Keratinocyte (primary cell): ENCODE measurements at regions of chr9 and their contacts with region 1.

Region 1: DNA sequence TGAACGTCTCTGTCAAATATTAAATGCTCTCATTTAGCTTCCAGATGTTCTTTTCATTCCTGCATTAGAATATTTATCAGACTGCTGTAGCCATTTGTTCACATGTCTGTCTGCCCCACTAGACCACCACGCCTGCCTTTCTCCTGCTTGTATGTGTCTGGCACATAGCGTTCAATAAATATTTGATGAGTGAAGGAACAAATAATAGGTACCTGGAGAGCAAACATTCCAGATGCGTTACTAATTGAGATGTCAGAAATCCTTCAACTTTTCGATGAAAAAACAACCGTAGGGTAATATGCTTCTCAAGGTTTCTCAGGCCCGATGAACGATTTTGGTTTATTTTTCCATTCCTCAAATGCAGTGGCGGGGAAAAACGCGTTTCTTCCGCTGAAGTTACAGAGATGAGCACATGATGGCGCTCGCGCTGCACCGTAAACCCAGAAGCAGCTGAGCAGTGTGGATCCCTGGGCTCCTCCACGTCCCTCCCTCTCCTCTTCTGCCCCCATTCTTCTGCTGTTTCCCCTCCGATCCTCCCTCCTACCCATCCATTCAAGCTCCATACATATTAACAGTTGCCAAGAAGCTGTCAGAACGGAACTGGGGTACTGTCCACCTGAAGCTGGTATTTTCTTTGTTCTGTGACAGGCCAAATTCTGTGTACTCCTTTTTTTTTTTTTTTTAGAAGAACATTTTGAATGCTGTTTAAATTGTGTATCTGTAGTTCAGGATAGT is 245.4 kb downstream of the MPDZ start:
- DNase-seq: no peak
- H3K4me3 ChIP-seq: peak overlapping the region in 1 of 3 experiments; percentile 36
- H3K27ac ChIP-seq: no peak overlapping the region
- H3K4me1 ChIP-seq: peaks cover 12% of the 10 kb centered on the region
- H3K27me3 ChIP-seq: no peaks in the 10 kb centered on the region
- CTCF ChIP-seq: peak; percentile 86 to 96 (median 86)

Region 2: DNA sequence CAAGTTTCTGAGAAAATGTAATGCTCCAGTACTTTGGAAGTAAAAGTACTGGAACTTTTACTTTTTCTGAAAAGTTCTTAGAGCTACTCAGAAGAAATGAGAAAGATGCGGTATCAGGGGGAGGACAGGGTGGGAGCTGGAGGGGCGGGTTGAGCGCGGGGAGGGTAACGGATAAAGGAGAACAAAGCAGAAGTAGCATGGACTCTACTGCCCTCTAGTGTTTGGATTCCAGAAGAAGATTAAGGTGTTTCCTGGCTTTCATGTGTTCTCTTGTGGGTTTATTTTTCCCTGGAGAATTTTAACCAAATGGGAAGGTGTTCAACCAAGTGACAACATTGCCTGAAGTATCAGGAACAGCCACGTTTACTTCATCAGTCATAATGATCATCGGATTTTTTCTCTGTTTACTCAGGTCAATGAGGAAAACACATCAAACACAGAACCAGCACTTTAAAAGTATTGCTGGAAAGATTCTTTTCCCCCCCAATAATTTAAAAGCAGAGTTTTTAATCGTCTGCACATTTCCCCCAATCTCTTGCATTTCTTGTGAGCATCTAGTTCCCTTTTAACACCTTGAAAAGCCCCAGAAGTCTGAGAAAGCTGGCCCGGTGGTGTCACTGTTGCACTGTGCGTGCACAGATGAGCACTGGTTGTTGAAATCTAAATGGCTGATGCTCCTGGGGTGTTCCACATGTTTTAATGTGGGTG is 54.7 kb after region 1 on chr9:
- dilution Hi-C with region 1: loop called (anchors 5 kb)
- DNase-seq: no peak
- H3K4me3 ChIP-seq: no peak overlapping the region
- H3K27ac ChIP-seq: no peak overlapping the region
- H3K4me1 ChIP-seq: peaks cover 5% of the 10 kb centered on the region
- H3K27me3 ChIP-seq: no peaks in the 10 kb centered on the region
- CTCF ChIP-seq: peak; percentile 34 to 69 (median 69)

Region 3: DNA sequence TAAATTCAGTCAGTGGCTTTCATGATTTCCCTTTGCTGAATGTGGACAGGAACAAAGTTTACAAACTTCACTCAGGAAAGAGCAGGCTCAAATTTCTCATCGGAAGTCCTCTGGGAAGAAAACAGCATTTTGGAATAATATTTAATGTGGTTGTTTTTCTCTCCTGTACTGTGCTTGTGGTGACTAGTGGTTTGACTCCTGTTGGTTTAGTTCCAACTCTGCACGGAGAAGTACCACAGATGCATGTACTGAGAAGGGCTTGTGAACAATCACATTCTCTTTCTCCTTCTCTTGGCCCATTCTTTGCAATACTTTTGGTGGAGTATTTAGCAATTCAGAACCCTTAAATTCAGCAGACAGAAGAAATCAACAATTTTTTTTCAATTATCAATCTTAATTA is 232.0 kb after region 1 on chr9:
- dilution Hi-C with region 1: no loop called
- DNase-seq: no peak
- H3K4me3 ChIP-seq: no peak overlapping the region
- H3K27ac ChIP-seq: no peak overlapping the region
- H3K4me1 ChIP-seq: peaks cover 9% of the 10 kb centered on the region
- H3K27me3 ChIP-seq: no peaks in the 10 kb centered on the region
- CTCF ChIP-seq: no peak

Region 4: GRCh38 chr9:13461414-13461991 is 427.4 kb after region 1 on chr9:
- dilution Hi-C with region 1: no loop called
- DNase-seq: no peak
- H3K4me3 ChIP-seq: no peak overlapping the region
- H3K27ac ChIP-seq: no peak overlapping the region
- H3K4me1 ChIP-seq: no peaks in the 10 kb centered on the region
- H3K27me3 ChIP-seq: no peaks in the 10 kb centered on the region
- CTCF ChIP-seq: no peak

Region 5: GRCh38 chr9:13661014-13661413 is 626.9 kb after region 1 on chr9:
- dilution Hi-C with region 1: no loop called
- DNase-seq: no peak
- H3K4me3 ChIP-seq: no peak overlapping the region
- H3K27ac ChIP-seq: no peak overlapping the region
- H3K4me1 ChIP-seq: no peaks in the 10 kb centered on the region
- H3K27me3 ChIP-seq: no peaks in the 10 kb centered on the region
- CTCF ChIP-seq: no peak